B cell (primary cell): ENCODE measurements at regions of chr14 and their contacts with region 1.

Region 1: GRCh38 chr14:49767562-49768300 is at the start of gene KLHDC2:
- DNase-seq: peak; percentile 93
- ATAC-seq: peak; percentile 86
- H3K4me3 ChIP-seq: peak within 1 kb of the TSS; percentile 74 to 97 (median 76)
- H3K4me3 Mint-ChIP-seq: peak within 1 kb of the TSS; percentile 98
- H3K27ac ChIP-seq: peak within 1 kb of the TSS; percentile 91 to 97
- H3K27ac Mint-ChIP-seq: peak within 1 kb of the TSS; percentile 99
- H3K4me1 ChIP-seq: peaks cover 22 to 29% of the 10 kb centered on the region in 2 donors
- H3K4me1 Mint-ChIP-seq: peaks cover 31% of the 10 kb centered on the region
- H3K27me3 ChIP-seq: no peaks in the 10 kb centered on the region
- H3K27me3 Mint-ChIP-seq: no peaks in the 10 kb centered on the region
- CTCF ChIP-seq: peak; percentile 40
- total RNA-seq, gene KLHDC2: 60.5 and 65.3 TPM in 2 replicates

Region 2: DNA sequence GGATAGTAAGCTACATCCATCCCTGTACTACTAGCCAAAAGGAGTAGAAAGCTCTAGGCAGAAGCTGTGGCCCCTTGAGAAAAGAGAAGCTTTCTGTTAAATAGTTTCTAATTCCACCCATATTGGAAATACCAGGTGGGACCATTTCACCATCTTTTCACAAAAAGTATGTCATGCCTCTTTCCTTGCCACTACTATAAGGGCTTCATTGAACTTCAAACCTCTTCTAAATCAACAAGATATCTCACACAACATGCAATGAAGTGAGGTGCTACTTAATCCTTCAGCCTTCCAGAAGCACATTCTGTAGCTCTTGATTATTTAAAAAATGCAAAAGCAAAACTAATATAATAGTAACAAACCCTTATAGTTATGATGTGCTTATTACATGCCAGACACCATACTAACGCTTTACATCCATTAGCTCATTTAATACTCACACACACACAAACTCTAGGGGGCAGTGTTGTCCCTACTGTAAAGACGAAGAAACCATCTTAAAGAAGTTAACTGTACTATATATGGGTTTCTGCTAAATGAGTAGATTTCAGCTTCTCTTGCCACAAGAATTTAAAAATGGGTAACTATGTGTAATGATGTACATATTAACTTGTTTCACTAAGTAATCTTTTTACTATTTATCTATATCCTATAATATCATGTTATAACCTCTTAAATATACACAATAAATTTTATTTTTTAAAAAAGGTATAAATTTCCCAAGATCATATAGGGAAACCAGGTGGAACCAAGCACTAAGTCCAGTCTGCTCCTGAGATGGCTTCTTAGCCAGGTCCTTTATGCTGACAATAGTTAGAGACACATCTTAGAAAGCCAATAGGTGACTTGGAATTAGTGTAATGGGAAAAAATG is 306.0 kb before region 1 on chr14:
- CTCF ChIA-PET with region 1: interaction called, 11 read pairs
- POLR2A ChIA-PET with region 1: no interaction called
- intact Hi-C with region 1: loop called (anchors 5 kb)
- DNase-seq: peak; percentile 82
- ATAC-seq: peak; percentile 83
- H3K4me3 ChIP-seq: no peak overlapping the region
- H3K4me3 Mint-ChIP-seq: no peak overlapping the region
- H3K27ac ChIP-seq: no peak overlapping the region
- H3K27ac Mint-ChIP-seq: no peak overlapping the region
- H3K4me1 ChIP-seq: no peaks in the 10 kb centered on the region
- H3K4me1 Mint-ChIP-seq: no peaks in the 10 kb centered on the region
- H3K27me3 ChIP-seq: no peaks in the 10 kb centered on the region
- H3K27me3 Mint-ChIP-seq: no peaks in the 10 kb centered on the region
- CTCF ChIP-seq: peak; percentile 81

Region 3: GRCh38 chr14:49598485-49599300 is 169.0 kb before region 1 on chr14 and contains the start of gene LRR1:
- CTCF ChIA-PET with region 1: interaction called, 3 read pairs
- POLR2A ChIA-PET with region 1: no interaction called
- intact Hi-C with region 1: loop called (anchors 1 kb)
- DNase-seq: peak; percentile 95
- ATAC-seq: peak; percentile 73
- H3K4me3 ChIP-seq: peak within 1 kb of the TSS; percentile 75 to 94 (median 80)
- H3K4me3 Mint-ChIP-seq: peak within 1 kb of the TSS; percentile 99
- H3K27ac ChIP-seq: peak within 1 kb of the TSS; percentile 92 to 97
- H3K27ac Mint-ChIP-seq: peak within 1 kb of the TSS; percentile 98
- H3K4me1 ChIP-seq: peaks cover 33 to 42% of the 10 kb centered on the region in 2 donors
- H3K4me1 Mint-ChIP-seq: peaks cover 55% of the 10 kb centered on the region
- H3K27me3 ChIP-seq: no peaks in the 10 kb centered on the region
- H3K27me3 Mint-ChIP-seq: no peaks in the 10 kb centered on the region
- CTCF ChIP-seq: no peak
- total RNA-seq, gene LRR1: 10.3 and 13.0 TPM in 2 replicates

Region 4: DNA sequence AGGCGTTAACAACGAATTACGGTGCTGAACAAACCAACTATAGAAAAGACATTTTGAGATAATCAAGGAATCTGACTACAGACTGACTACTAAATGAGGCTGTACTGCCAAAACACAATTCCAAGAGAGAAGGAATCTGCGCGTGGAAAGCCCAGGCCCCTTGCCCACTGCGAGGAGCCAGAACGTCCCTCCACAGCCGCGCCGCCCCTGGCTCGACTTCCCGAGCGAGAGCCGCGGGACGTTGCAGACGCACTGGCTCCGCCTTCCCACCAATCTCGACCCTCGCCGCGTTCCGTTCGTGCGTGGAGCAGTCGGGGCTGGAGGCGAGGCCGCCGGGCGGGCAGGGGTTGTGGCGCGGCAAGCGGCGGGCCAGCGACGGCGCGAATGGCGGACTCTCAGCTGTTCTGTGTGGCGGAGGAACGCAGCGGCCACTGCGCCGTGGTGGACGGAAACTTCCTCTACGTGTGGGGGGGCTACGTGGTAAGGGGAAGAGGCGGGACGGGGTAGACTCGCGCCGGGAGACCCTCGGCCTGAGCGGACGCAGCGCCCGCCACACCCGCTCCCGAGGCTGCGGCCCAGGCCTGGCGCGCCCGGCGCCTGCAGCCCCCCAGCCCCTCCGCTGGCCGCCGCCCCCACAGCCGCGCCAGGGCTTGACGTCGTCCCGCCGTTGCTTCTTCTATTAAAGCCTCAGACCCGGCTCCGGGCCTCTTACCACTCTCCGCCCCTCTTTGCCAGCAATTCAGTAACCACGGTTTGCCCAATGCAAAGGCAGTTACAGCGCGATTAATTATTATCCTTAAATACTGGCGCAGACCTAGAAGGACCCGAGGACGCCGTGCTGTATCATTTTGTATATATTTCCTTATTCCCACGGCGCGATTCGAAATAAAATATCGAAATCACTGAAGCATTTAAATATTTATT is 74.7 kb before region 1 on chr14 and contains the start of gene KLHDC1:
- CTCF ChIA-PET with region 1: interaction called, 5 read pairs
- POLR2A ChIA-PET with region 1: interaction called, 12 read pairs
- intact Hi-C with region 1: loop called (anchors 1 kb)
- DNase-seq: peak; percentile 85
- ATAC-seq: peak; percentile 78
- H3K4me3 ChIP-seq: peak within 1 kb of the TSS; percentile 44 to 74 (median 72)
- H3K4me3 Mint-ChIP-seq: peak within 1 kb of the TSS; percentile 92
- H3K27ac ChIP-seq: peak within 1 kb of the TSS; percentile 47 to 83
- H3K27ac Mint-ChIP-seq: peak within 1 kb of the TSS; percentile 87
- H3K4me1 ChIP-seq: peaks cover 9 to 11% of the 10 kb centered on the region in 2 donors
- H3K4me1 Mint-ChIP-seq: peaks cover 23% of the 10 kb centered on the region
- H3K27me3 ChIP-seq: no peaks in the 10 kb centered on the region
- H3K27me3 Mint-ChIP-seq: no peaks in the 10 kb centered on the region
- CTCF ChIP-seq: no peak
- total RNA-seq, gene KLHDC1: 11.7 and 13.7 TPM in 2 replicates

Region 5: DNA sequence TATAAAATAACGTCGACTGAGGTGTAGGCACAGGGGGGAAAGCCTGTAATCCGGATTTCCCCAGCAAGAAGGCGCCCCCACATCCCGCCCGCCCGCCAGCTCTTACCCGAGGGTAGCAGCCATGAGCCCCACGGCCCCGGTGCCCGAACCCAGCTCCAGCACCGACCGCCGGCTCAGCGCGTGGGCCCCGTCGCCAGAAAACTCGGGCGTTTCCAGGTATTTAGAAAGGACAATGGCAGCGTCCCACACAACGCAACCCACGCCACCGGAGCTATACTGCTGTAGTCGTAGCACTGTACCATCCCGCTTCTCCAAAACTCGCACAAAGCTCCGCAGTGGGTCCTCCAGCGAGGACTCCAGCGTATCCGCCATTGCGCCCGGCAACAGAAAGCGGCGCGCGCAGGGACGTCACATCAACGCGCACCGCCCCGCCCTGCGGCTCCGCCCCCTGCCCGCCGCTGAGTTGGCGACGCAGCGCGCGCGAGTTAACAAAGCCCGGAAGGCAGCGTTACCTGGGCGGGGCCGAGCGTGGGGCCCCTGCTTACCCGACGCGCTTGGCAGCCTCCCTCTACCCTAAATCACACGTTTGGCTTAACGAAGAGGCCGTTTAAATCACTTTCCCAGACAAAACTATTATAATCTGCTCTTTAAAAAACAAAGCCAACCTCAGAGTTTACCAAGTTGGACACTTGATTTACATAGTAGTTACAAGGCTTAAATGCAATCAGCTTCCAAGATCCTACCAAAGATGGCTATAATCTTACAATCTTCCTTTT is 348.6 kb after region 1 on chr14 and contains the start of gene VCPKMT:
- CTCF ChIA-PET with region 1: no interaction called
- POLR2A ChIA-PET with region 1: no interaction called
- intact Hi-C with region 1: loop called (anchors 5 kb)
- DNase-seq: peak; percentile 97
- ATAC-seq: peak; percentile 97
- H3K4me3 ChIP-seq: peak within 1 kb of the TSS; percentile 69 to 92 (median 87)
- H3K4me3 Mint-ChIP-seq: peak within 1 kb of the TSS; percentile 98
- H3K27ac ChIP-seq: peak within 1 kb of the TSS; percentile 92 to 99
- H3K27ac Mint-ChIP-seq: peak within 1 kb of the TSS; percentile 98
- H3K4me1 ChIP-seq: peaks cover 44 to 45% of the 10 kb centered on the region in 2 donors
- H3K4me1 Mint-ChIP-seq: peaks cover 45% of the 10 kb centered on the region
- H3K27me3 ChIP-seq: no peaks in the 10 kb centered on the region
- H3K27me3 Mint-ChIP-seq: no peaks in the 10 kb centered on the region
- CTCF ChIP-seq: no peak
- total RNA-seq, gene VCPKMT: 22.8 and 27.1 TPM in 2 replicates